Colonic mucosa (tissue), 4 donors: ENCODE measurements at regions of chr10 and their contacts with region 1.

Region 1: DNA sequence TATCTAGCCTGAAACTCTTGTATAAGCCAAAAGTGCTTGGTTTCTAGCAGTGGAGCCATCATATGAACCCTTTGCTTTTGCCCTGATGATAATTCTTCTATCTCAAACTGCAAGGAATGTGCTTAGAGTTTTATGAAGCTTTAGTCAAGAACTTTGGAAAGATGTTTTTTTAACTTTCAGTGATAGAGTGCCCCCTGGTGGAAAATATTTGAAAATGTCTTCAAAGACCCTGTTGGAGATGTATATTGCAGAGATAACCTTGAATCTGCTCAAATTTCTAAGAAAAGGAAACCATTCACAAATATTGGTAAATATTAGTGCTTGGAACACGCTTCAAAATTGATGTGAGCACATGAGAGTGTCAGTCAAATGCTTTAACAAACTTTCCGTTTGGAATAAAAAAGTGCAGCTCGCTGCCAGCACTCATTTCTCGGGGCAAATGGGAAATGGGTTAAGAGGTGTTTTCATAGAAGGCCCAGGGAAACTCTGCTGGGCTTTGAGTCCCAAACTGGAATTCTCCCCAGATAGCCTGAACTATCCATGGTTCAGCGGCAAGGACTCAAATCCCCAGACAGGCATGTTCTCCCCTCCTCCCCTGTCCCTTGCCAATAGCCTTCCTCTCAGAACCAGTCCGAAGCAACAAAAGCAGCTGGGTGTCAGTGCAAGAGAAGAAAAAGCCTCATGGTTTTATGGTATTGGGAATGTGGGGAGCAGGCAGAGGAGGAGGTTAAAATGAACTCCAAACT is 129.3 kb downstream of the MYOF start:
- DNase-seq: no peak
- H3K4me3 ChIP-seq: no peak overlapping the region
- H3K27ac ChIP-seq: no peak overlapping the region
- H3K4me1 ChIP-seq: no peaks in the 10 kb centered on the region
- H3K27me3 ChIP-seq: no peaks in the 10 kb centered on the region
- CTCF ChIP-seq: peak; percentile 63

Region 2: DNA sequence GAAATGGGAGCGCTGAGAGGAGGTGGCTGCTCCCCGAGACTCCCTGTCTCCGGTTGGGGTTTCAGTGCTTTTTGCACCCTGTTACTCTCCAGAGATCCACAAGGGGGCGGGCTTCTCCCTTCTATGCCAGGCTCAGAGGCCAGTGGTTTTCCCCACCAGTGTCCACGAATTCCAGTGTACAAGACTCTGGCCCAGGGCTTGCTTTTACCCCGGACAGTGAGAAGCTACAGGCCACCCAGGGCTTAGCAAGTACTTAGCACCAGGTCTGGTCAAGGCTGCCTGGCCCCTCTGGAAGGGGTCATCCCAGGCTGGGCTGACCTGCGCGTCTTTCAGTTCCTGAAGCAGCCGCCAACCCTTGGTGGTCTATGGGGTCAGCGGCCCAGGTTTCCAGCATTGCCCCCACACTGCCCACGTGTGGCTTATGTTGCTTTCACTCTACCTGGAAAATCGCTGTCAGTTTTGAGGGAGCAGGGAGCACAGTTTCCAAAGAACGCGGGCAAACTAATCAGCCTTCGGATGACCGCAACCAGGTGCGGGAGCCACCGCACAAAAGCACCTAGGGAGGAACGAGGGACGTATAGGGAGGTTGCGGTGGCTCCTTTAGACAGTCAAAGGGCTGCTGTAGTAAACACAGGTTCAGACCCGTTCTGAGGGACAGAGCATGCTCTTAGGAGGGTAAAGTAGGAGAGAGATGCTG is 272.3 kb before region 1 on chr10:
- intact Hi-C with region 1: loop called (anchors 5 kb)
- DNase-seq: peak; percentile 49
- H3K4me3 ChIP-seq: no peak overlapping the region
- H3K27ac ChIP-seq: no peak overlapping the region
- H3K4me1 ChIP-seq: no peaks in the 10 kb centered on the region
- H3K27me3 ChIP-seq: peaks cover 13% of the 10 kb centered on the region
- CTCF ChIP-seq: peak; percentile 67

Region 3: GRCh38 chr10:93482145-93482834 is 129.5 kb after region 1 on chr10 and contains the start of gene MYOF:
- intact Hi-C with region 1: no loop called
- DNase-seq: peak; percentile 80
- H3K4me3 ChIP-seq: peak within 1 kb of the TSS; percentile 47
- H3K27ac ChIP-seq: peak within 1 kb of the TSS; percentile 87
- H3K4me1 ChIP-seq: peaks cover 5% of the 10 kb centered on the region
- H3K27me3 ChIP-seq: no peaks in the 10 kb centered on the region
- CTCF ChIP-seq: peak; percentile 52
- total RNA-seq, gene MYOF: 88.1 to 90.9 TPM